ENCODE measurements at regions of chr5 and their contacts with region 1.

Region 1: DNA sequence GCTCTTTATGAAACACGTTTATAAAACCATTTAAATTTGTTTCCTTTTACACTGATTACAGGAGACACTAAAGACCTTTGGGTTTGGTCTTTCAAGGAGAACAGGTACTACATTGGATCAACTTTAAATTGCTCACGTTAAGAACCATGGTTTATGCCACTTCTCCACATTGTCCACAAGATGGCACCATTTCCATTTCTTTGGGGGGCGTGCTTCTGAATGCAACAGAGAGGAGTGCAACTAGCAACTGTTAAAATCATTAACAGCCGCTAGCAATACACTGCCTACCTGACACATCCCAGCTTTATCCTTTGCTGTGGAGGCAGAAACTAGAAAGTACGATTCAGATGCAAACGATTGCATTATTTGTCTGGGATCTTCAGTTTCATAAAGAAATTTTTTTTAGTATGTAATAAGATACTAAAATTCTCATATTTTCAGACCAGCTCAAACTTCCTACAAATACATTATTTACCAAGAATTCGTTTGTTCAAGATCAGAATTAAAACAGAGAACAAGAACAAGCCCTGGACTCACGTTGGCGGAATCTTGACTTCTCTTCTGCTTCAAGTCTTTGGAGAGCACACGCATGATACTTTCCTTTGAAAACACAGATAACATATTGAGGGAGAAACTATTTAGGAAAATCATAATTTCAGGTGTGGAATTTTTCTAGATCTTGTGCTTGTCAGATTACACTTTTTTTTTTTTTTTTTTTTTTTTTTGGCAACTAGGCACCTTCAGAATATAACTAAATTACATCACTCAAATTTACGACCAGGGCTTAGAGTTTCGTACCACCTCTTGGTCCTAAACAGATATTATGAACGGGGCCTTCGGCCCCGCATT is 702 bp downstream of the CDC20B start:
- DNase-seq: no peak
- ATAC-seq: peak; percentile 76 to 91 (median 82)
- H3K4me3 ChIP-seq: peak overlapping the region; percentile 68
- H3K27ac ChIP-seq: no peak overlapping the region
- H3K4me1 ChIP-seq: peaks cover 12% of the 10 kb centered on the region
- H3K27me3 ChIP-seq: peaks cover 0 to 45% (median 12%) of the 10 kb centered on the region in 3 donors
- CTCF ChIP-seq: peak; percentile 82

Region 2: GRCh38 chr5:55227737-55228430 is 55.6 kb after region 1 on chr5:
- intact Hi-C with region 1: loop called (anchors 2 to 10 kb)
- DNase-seq: no peak
- ATAC-seq: no peak
- H3K4me3 ChIP-seq: peak overlapping the region; percentile 65
- H3K27ac ChIP-seq: no peak overlapping the region
- H3K4me1 ChIP-seq: peaks cover 23% of the 10 kb centered on the region
- H3K27me3 ChIP-seq: peaks cover 3 to 100% (median 77%) of the 10 kb centered on the region in 3 donors
- CTCF ChIP-seq: no peak

Region 3: DNA sequence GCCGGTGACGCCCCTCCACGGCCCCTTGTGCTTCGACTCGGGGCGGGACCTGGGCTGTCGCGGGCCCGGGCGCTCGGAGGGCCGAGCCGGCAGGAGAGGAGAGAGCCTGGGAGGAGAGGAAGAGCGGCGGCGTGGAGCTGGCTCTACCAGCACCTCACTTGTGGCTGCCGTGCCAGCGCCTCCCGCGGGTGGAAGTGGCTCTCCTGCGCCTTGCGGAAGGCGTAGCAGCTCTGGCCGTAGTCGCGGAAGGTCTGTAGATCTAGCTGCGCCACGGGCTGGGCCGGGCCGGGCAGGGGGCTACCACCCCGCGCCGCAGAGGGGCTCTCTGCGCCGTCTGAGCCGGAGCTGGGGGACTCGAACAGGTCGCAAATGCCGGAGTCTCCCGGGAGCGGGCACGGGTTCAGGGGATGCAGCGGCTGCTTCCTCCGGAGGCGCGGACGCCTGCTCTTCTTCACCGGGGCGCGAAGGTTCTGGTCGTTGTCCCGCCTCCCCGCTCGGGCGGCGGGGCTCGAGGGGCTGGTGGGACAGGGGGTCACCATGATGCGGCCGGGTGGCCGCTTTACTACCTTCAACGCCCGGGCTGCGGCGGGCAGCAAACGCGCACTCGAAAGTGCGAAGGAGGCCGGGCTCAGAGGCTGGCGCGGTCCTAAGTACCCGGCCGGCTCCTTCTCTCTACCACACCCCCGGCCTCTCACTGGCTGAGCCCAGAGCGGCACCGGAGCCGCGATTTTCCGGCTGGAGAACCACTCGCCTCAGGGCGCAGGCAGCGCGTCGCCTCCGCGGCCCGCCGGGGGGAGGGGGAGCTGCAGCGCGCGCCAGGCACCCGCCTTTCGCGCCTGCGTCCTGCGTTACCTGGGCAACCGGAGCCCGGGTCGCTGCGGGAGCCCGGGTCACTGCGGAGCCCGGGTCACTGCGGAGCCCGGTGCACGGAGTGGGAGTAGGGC is 61.0 kb after region 1 on chr5 and contains the start of gene CCNO:
- intact Hi-C with region 1: loop called (anchors 2 to 10 kb)
- DNase-seq: peak; percentile 62 to 67
- ATAC-seq: peak; percentile 71 to 79 (median 75)
- H3K4me3 ChIP-seq: peak within 1 kb of the TSS; percentile 72
- H3K27ac ChIP-seq: no peak within 1 kb of the TSS
- H3K4me1 ChIP-seq: peaks cover 22% of the 10 kb centered on the region
- H3K27me3 ChIP-seq: peaks cover 4 to 98% (median 53%) of the 10 kb centered on the region in 3 donors
- CTCF ChIP-seq: no peak
- total RNA-seq, gene CCNO: not detected

Region 4: DNA sequence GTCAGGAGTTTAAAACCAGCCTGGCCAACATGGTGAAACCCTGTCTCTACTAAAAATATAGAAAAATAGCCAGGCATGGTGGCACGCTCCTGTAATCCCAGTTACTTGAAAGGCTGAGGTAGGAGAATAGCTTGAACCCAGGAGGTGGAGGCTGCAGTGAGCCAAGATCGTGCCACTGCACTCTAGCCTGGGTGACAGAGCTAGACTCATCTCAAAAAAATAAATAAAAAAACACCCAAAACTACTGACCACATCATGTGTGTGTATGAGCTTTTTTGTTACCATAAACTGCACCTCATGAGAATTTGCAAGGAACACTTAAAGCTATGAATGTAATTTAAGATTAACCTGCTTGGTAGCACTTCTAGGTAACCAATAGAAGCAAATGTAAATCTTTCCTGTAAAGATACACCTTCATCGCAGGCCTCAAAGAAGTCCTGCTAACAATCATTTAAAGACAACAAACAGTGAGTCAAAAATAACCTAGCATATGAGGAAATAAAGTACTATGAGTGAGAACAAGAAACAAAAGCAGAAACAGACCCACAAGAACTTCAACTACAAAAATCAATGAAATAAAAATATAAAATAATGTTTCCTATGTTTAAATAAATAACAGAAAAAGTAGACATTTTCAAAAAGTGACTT is 526.9 kb after region 1 on chr5:
- intact Hi-C with region 1: loop called in 1 of 2 experiments (anchors 5 kb)
- DNase-seq: no peak
- ATAC-seq: peak in 1 of 4 donors; percentile 47
- H3K4me3 ChIP-seq: no peak overlapping the region
- H3K27ac ChIP-seq: no peak overlapping the region
- H3K4me1 ChIP-seq: peaks cover 5% of the 10 kb centered on the region
- H3K27me3 ChIP-seq: no peaks in the 10 kb centered on the region
- CTCF ChIP-seq: no peak

Measured in psoas muscle (tissue), 8 donors.